MCF 10A (cell line): ENCODE measurements at regions of chr9 and their contacts with region 1.

Region 1: DNA sequence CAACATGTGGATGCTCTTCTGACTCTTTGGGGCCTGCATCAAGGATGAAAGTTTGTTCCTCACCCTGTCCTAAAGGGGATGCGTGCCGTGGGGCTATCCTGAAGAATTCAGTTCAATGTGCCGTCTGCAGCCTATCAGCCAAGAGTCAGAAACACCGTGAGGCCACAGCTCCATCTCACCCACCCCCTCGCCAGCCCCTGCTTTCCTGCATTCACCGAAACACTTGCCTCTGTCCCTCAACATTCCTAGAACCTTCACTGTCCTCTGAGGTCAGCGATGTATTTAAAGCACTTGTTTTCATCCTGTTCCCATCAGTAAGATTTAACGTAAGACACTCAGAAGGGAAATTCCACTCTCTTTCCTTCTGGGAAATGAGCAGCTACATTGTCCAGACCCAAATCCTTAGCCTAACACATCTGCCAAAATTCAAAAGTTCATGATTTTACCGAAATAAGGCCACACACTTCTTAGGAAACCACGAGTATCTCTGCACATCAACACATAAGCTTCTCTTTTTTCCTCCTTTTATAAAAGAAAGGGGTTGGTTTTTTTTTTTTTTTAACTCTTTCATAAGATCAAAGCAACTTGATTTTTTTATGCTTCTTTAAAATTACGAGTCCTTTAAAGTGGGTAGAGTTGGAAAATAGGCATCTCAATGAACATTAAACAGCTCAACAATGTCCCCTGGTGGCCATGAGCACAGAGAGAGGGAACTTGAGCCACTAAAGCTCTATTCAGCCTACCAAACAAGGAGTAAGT is 100.7 kb downstream of the SUSD1 start:
- DNase-seq: peak; percentile 87
- H3K4me3 Mint-ChIP-seq: no peak overlapping the region
- H3K27ac Mint-ChIP-seq: peak overlapping the region; percentile 83
- H3K4me1 Mint-ChIP-seq: peaks cover 15% of the 10 kb centered on the region
- H3K27me3 Mint-ChIP-seq: no peaks in the 10 kb centered on the region
- CTCF ChIP-seq: peak; percentile 90

Region 2: GRCh38 chr9:111759762-111760639 is 314.4 kb before region 1 on chr9:
- CTCF ChIA-PET with region 1: interaction called, 177 read pairs
- POLR2A ChIA-PET with region 1: interaction called, 25 read pairs
- intact Hi-C with region 1: loop called (anchors 1 kb)
- DNase-seq: peak; percentile 85
- H3K4me3 Mint-ChIP-seq: no peak overlapping the region
- H3K27ac Mint-ChIP-seq: peak overlapping the region; percentile 87
- H3K4me1 Mint-ChIP-seq: peaks cover 8% of the 10 kb centered on the region
- H3K27me3 Mint-ChIP-seq: no peaks in the 10 kb centered on the region
- CTCF ChIP-seq: peak; percentile 68

Region 3: GRCh38 chr9:111828193-111828592 is 246.2 kb before region 1 on chr9:
- CTCF ChIA-PET with region 1: interaction called, 5 read pairs
- POLR2A ChIA-PET with region 1: no interaction called
- intact Hi-C with region 1: loop called (anchors 1 kb)
- DNase-seq: peak; percentile 42
- H3K4me3 Mint-ChIP-seq: no peak overlapping the region
- H3K27ac Mint-ChIP-seq: no peak overlapping the region
- H3K4me1 Mint-ChIP-seq: peaks cover 22% of the 10 kb centered on the region
- H3K27me3 Mint-ChIP-seq: no peaks in the 10 kb centered on the region
- CTCF ChIP-seq: no peak

Region 4: DNA sequence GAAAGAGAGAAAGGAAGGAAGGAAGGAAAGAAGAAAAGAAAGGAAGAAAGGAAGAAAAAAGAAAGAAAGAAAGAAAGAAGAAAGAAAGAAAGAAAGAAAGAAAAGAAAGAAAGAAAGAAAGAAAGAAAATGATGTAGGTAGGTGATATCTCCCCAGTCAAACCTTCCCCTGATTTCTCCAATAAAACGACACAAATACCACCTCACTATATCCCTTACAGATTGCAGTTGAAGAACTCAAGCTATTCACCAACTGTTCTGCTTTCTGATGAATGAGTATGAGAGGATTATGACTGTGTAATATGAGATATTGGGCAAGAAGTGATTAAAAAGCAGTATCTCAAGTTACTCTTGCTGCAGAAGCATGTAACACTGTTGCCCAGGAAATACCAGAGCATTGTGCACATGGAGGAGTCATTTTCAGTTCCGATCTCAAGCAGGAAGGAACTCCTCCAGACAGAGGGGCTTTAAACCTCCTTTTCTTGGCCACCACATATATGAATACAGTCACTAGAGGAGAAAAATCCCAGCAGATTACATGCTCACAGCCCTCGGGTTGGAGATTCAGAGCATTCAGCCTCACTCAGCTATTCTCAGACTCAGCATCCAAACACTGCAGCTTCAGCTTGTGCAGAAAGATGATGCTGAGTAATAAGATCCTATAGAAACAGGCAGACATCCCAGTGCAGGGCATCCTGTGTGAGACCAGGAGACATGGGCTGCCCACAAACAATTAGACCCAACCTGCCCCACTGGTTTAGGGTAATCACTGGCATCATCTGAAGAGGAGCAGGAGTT is 116.4 kb before region 1 on chr9:
- CTCF ChIA-PET with region 1: interaction called, 5 read pairs
- POLR2A ChIA-PET with region 1: interaction called, 4 read pairs
- intact Hi-C with region 1: loop called (anchors 5 kb)
- DNase-seq: peak; percentile 89
- H3K4me3 Mint-ChIP-seq: peak overlapping the region; percentile 68
- H3K27ac Mint-ChIP-seq: peak overlapping the region; percentile 85
- H3K4me1 Mint-ChIP-seq: peaks cover 36% of the 10 kb centered on the region
- H3K27me3 Mint-ChIP-seq: no peaks in the 10 kb centered on the region
- CTCF ChIP-seq: no peak

Region 5: GRCh38 chr9:112020680-112021596 is 53.5 kb before region 1 on chr9:
- CTCF ChIA-PET with region 1: interaction called, 6 read pairs
- POLR2A ChIA-PET with region 1: no interaction called
- intact Hi-C with region 1: loop called (anchors 5 kb)
- DNase-seq: peak; percentile 74
- H3K4me3 Mint-ChIP-seq: no peak overlapping the region
- H3K27ac Mint-ChIP-seq: peak overlapping the region; percentile 71
- H3K4me1 Mint-ChIP-seq: peaks cover 9% of the 10 kb centered on the region
- H3K27me3 Mint-ChIP-seq: no peaks in the 10 kb centered on the region
- CTCF ChIP-seq: no peak